Activated naive CD4-positive, alpha-beta T cell treated with anti-CD3 and anti-CD28 coated beads for 36 hours (primary cell): ENCODE measurements at regions of chr1 and their contacts with region 1.

Region 1: DNA sequence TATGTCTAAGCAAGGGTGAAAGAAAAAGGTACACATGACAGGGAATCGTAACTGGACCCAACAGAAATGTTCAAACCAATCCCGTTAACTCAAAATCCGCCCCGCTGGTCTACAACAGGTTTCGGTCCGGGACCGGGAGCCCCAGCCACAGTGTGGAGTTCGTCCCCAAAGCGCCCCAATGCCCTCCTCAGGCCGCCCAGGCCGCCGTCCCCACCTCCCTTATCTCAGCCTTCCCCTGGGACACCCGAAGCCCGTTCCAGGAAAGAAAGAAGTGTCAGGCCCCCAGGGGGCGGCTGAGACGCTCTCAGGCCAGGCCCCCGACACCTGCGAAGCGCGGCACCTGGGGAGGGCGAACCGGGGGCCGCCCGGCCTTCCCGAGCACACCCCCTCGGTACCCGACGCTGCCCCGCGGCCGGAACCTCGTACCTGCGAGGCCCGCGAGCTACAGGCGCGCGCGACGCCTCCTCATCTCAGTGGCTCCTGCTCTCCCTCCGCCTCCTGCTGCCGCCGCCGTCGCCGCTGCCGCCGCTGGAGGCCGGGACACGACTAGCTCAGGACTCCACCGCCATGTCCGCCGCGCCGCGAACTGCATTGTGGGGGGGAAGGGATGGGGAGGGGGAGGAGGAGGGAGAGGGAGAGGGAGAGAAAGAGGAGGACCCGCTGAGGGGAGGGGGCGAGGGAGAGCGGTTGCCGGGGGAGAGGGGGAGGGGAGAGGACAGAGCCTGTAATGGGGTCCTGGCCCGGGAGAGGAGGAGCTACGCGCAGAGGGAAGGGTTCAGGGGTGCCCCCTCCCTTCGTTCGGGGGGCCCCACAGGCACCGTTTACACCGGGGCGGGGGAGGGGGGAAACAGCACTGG is at the start of gene TUT4:
- DNase-seq: peak; percentile 88
- H3K4me3 Mint-ChIP-seq: peak within 1 kb of the TSS; percentile 50
- H3K27ac Mint-ChIP-seq: no peak within 1 kb of the TSS
- H3K4me1 Mint-ChIP-seq: peaks cover 31% of the 10 kb centered on the region
- H3K27me3 Mint-ChIP-seq: no peaks in the 10 kb centered on the region
- total RNA-seq, gene TUT4: 48.1 to 51.2 TPM

Region 2: DNA sequence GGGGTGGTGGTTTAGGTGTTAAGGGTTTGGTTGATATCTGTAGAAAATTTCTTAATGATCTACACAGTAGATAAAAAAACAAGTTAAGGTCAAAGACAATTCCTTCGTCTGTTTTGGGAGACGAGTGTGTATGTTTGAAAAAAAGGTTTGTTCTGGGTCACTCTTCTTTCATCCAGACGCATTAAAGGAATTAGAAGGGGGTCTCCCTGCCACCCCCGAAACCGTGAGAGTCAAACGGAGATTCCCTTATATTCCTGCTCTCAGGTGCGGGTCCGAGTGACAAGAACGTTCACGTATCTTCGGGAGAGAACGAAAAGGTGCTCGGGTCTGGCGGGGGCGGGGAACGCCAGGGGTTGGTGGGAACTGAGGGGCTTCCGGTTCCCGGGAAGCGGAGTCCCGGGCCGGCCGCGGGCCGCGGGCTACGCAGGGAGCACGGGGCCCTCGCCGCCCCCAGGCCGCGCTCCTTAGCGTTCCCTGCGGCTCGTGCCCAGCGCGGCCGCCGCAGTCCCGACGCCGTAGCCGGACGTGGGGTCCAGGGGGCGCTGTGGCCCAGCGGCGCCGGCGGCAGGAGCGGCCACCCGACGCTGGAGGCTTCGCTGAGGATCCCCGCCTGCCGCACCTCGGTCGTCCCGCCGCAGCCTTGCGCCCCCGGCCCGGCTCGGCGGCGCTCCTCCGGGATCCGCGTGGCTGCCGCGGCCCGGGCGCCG is 411.1 kb before region 1 on chr1 and contains the start of gene ZFYVE9:
- CTCF ChIA-PET with region 1: no interaction called
- intact Hi-C with region 1: loop called (anchors 5 kb)
- DNase-seq: peak; percentile 66
- H3K4me3 Mint-ChIP-seq: peak within 1 kb of the TSS; percentile 84
- H3K27ac Mint-ChIP-seq: peak within 1 kb of the TSS; percentile 68
- H3K4me1 Mint-ChIP-seq: peaks cover 40% of the 10 kb centered on the region
- H3K27me3 Mint-ChIP-seq: no peaks in the 10 kb centered on the region
- total RNA-seq, gene ZFYVE9: 3.0 to 3.5 TPM

Region 3: DNA sequence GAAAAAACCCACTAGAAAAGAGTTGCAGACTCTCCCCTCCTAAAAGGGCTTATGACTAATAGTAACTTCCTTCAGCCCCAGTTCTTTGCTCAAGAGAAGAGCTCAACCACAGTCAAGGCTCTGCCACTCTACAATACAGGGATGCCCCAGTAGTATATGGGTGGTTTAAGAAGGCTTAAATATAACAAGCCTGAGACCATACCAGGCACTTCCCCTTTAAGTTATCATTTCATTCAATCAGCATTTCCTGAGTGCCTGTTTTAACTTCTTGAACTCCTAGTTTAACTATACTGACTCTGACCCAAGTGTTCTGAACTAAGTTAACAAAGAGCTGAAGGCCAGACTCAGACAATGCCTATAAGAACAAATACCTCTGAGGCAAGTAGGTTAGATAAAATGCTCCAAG is 128.5 kb before region 1 on chr1:
- CTCF ChIA-PET with region 1: interaction called, 4 read pairs
- intact Hi-C with region 1: loop called (anchors 1 kb)
- DNase-seq: peak; percentile 34
- H3K4me3 Mint-ChIP-seq: peak overlapping the region; percentile 57
- H3K27ac Mint-ChIP-seq: peak overlapping the region; percentile 83
- H3K4me1 Mint-ChIP-seq: peaks cover 51% of the 10 kb centered on the region
- H3K27me3 Mint-ChIP-seq: no peaks in the 10 kb centered on the region

Region 4: DNA sequence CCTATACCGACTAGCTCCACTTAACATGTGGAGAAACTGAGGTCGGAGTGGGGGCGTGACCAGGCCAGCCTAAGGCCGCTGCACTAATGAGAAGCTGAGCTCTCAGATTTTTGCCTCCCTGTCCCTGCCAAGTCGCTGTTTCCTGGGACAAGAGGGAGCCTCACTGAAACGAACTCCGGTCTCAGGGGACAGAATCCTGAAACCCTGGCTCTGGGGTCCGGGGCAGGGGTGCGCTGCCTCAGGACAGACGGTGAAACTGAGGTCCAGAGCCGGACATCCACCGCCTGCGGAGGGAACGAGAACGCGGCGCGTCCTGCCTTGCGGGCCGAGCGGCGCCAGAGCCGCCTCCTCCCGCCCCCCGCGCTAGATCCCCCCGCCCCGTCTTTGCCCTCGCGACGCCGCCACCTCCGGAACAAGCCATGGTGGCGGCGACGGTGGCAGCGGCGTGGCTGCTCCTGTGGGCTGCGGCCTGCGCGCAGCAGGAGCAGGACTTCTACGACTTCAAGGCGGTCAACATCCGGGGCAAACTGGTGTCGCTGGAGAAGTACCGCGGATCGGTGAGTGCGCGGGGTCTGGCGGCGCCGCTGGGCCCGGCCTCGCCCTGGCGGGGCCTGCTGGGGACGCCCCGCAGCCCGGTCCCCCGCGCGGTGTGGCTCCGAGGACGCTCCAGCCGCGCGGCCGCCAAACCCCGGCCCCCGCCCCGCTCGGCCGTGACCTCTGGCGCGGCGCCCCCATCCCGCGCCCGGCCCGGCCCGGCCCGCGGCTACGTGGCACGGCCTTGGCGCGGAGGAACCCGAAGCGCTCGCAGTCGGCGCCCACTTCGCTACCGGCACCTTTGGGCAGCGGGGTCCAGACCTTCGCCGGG is 49.5 kb after region 1 on chr1 and contains the start of gene GPX7:
- CTCF ChIA-PET with region 1: interaction called, 3 read pairs
- intact Hi-C with region 1: loop called (anchors 1 kb)
- DNase-seq: peak; percentile 59
- H3K4me3 Mint-ChIP-seq: peak within 1 kb of the TSS; percentile 90
- H3K27ac Mint-ChIP-seq: peak within 1 kb of the TSS; percentile 91
- H3K4me1 Mint-ChIP-seq: peaks cover 38% of the 10 kb centered on the region
- H3K27me3 Mint-ChIP-seq: no peaks in the 10 kb centered on the region
- total RNA-seq, gene GPX7: 20.4 to 20.6 TPM

Region 5: DNA sequence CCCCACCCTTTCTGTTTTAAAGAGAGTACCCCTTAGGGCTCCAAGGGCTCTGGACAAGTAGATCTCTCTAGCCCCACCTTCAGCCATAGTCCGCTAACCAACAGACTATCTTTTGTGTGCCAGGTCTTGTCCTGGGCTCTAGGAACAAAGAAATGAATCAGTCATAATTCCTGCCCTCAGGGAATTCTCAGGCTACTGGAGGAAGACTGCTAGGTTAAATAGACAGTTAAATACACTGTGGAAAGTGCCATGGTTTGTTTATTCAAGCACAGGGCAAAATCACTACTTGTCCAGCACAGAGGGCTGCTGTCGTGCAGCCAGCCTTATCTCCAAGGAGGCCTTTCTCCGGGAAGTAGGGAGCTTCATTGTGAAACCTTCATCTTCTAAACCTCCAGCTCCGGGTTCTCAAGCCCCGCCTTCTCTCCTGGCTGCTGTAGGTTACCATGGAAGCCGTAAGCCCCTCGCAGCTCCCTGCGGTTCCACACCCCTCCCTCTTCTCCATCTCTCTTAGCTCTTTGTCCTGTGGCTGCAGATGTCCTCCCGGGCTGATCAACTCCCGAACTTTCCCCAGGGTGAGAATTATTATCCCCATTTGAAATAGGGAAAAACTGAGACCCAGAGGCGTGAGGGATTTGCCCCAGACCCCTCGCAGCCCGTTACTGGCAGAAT is 110.0 kb after region 1 on chr1:
- CTCF ChIA-PET with region 1: interaction called, 3 read pairs
- intact Hi-C with region 1: loop called (anchors 2 kb)
- DNase-seq: no peak
- H3K4me3 Mint-ChIP-seq: no peak overlapping the region
- H3K27ac Mint-ChIP-seq: peak overlapping the region; percentile 71
- H3K4me1 Mint-ChIP-seq: peaks cover 16% of the 10 kb centered on the region
- H3K27me3 Mint-ChIP-seq: no peaks in the 10 kb centered on the region